Ovary (tissue), 10 donors: ENCODE measurements at regions of chr16 and their contacts with region 1.

Region 1: GRCh38 chr16:57911743-57912142 is 59.2 kb downstream of the CNGB1 start:
- DNase-seq: no peak
- H3K4me3 ChIP-seq: no peak overlapping the region
- H3K27ac ChIP-seq: no peak overlapping the region
- H3K4me1 ChIP-seq: no peaks in the 10 kb centered on the region
- H3K27me3 ChIP-seq: no peaks in the 10 kb centered on the region
- CTCF ChIP-seq: no peak
- EP300 ChIP-seq: no peak
- POLR2A ChIP-seq: no peak

Region 2: DNA sequence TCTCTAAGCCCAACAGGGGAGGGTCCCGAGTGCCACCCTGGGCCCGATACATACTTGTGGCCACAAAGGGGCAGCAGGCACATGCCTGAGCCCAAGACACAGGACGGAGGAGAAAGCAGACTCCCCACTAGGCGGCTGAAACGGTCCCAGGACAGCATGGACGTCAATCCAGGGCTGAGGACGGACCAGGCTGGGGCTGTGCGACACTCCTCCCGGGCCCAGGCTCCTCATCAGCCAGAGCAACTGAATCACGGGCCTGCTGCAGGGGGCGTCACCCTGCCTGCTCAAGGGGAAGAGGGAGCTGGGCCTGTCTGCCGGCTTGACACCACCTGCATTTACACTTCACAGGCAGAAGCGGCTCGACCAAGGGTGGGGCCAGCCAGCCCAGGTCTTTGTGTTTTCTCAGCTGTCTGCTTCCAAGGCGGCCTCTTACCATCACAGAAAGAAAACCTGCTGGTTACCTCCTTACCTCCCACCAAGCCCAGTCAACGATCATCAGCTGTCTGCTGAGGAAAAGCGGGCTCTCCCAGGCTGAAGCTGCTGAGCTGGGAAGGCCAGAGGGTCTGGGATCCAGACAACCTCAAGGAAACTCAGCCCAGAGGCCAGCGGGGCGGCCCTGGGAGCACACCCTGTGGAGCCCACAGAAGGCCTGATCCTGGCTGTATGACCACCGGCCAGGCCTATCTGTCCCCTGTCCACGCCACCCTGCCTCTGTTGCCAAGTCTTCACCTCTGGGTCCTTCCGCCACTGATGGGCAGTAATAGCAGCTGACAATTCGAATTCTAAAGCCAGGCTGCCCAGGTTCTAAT is 135.9 kb before region 1 on chr16:
- intact Hi-C with region 1: no loop called
- DNase-seq: no peak
- H3K4me3 ChIP-seq: no peak overlapping the region
- H3K27ac ChIP-seq: no peak overlapping the region
- H3K4me1 ChIP-seq: no peaks in the 10 kb centered on the region
- H3K27me3 ChIP-seq: no peaks in the 10 kb centered on the region
- CTCF ChIP-seq: no peak
- EP300 ChIP-seq: no peak
- POLR2A ChIP-seq: no peak

Region 3: DNA sequence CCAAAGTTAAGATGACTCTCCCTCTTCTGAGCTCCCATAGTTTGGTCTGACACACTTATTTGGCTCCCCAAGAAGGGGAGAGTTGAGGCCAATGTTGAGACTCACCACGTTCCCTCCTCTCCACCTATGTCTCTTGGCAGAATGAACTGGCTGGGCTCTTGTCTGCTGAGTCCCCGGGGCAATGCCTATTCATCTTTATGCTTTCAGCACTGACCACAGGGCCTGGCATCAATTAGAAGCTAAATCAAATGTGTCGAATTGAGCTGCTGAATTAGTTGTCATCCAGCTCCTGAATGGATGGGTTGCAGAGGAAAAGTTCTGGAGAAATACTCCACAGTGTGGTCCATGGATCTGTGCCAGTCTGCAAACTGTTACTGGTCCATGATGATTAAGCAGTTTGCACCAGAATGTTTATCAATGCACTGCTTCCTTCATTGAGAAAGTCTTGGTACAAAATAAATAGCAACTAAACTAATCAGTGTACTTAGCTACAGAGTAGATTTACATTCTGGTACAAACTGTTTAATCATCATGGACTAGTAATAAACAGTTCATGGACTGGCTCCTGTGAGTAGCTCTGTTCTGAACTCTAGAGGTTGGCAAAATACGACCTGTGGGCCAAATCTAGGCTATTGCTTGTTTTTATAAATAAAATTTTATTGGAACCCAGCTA is 54.5 kb after region 1 on chr16:
- intact Hi-C with region 1: no loop called
- DNase-seq: no peak
- H3K4me3 ChIP-seq: no peak overlapping the region
- H3K27ac ChIP-seq: no peak overlapping the region
- H3K4me1 ChIP-seq: no peaks in the 10 kb centered on the region
- H3K27me3 ChIP-seq: no peaks in the 10 kb centered on the region
- CTCF ChIP-seq: no peak
- EP300 ChIP-seq: no peak
- POLR2A ChIP-seq: no peak

Region 4: DNA sequence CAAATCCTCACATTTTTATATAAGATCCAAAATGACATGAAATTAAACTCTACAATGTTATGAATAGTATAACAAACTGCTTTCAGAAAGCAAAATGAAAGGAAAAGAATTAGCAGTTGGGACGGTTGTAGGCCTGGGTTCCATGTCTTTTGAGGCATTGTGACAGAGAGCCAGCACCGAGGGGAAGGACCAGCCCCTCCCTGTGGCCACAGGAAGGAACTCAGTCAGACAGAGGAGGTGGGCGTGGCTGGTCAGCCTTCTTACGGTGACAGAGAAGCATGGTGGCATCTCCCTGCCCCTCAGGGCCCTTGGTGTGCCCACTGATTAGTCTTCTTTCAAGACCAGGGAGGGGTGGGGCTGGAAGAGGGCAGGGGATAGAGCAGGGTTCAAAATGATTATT is 83.0 kb after region 1 on chr16:
- intact Hi-C with region 1: loop called in 2 of 4 experiments (anchors 5 to 10 kb)
- DNase-seq: no peak
- H3K4me3 ChIP-seq: no peak overlapping the region
- H3K27ac ChIP-seq: no peak overlapping the region
- H3K4me1 ChIP-seq: peaks cover 3% of the 10 kb centered on the region
- H3K27me3 ChIP-seq: no peaks in the 10 kb centered on the region
- CTCF ChIP-seq: no peak
- EP300 ChIP-seq: no peak
- POLR2A ChIP-seq: no peak

Region 5: GRCh38 chr16:58070585-58070984 is 158.8 kb after region 1 on chr16:
- intact Hi-C with region 1: no loop called
- DNase-seq: no peak
- H3K4me3 ChIP-seq: no peak overlapping the region
- H3K27ac ChIP-seq: no peak overlapping the region
- H3K4me1 ChIP-seq: no peaks in the 10 kb centered on the region
- H3K27me3 ChIP-seq: no peaks in the 10 kb centered on the region
- CTCF ChIP-seq: no peak
- EP300 ChIP-seq: no peak
- POLR2A ChIP-seq: no peak